CD4-positive, alpha-beta T cell (primary cell): ENCODE measurements at regions of chr7 and their contacts with region 1.

Region 1: GRCh38 chr7:117470777-117471176 is 9.0 kb upstream of the CFTR start:
- DNase-seq: peak in 1 of 14 experiments; percentile 3
- ATAC-seq: no peak
- H3K4me3 ChIP-seq: no peak overlapping the region
- H3K4me3 Mint-ChIP-seq: no peak overlapping the region
- H3K27ac ChIP-seq: no peak overlapping the region
- H3K27ac Mint-ChIP-seq: no peak overlapping the region
- H3K4me1 ChIP-seq: no peaks in the 10 kb centered on the region
- H3K4me1 Mint-ChIP-seq: no peaks in the 10 kb centered on the region
- H3K27me3 ChIP-seq: no peaks in the 10 kb centered on the region
- H3K27me3 Mint-ChIP-seq: no peaks in the 10 kb centered on the region
- CTCF ChIP-seq: no peak

Region 2: GRCh38 chr7:117251687-117252086 is 219.1 kb before region 1 on chr7:
- CTCF ChIA-PET with region 1: no interaction called
- POLR2A ChIA-PET with region 1: no interaction called
- intact Hi-C with region 1: no loop called
- DNase-seq: no peak
- ATAC-seq: no peak
- H3K4me3 ChIP-seq: no peak overlapping the region
- H3K4me3 Mint-ChIP-seq: no peak overlapping the region
- H3K27ac ChIP-seq: no peak overlapping the region
- H3K27ac Mint-ChIP-seq: no peak overlapping the region
- H3K4me1 ChIP-seq: no peaks in the 10 kb centered on the region
- H3K4me1 Mint-ChIP-seq: no peaks in the 10 kb centered on the region
- H3K27me3 ChIP-seq: no peaks in the 10 kb centered on the region
- H3K27me3 Mint-ChIP-seq: no peaks in the 10 kb centered on the region
- CTCF ChIP-seq: no peak

Region 3: DNA sequence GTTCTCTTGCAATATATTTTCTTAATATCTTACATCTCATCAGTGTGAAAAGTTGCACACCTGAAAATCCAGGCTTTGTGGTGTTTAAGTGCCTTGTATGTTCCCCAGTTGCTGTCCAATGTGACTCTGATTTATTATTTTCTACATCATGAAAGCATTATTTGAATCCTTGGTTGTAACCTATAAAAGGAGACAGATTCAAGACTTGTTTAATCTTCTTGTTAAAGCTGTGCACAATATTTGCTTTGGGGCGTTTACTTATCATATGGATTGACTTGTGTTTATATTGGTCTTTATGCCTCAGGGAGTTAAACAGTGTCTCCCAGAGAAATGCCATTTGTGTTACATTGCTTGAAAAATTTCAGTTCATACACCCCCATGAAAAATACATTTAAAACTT is 38.9 kb after region 1 on chr7:
- CTCF ChIA-PET with region 1: no interaction called
- POLR2A ChIA-PET with region 1: no interaction called
- intact Hi-C with region 1: loop called in 1 of 2 experiments (anchors 1 kb)
- DNase-seq: no peak
- ATAC-seq: no peak
- H3K4me3 ChIP-seq: no peak overlapping the region
- H3K4me3 Mint-ChIP-seq: no peak overlapping the region
- H3K27ac ChIP-seq: no peak overlapping the region
- H3K27ac Mint-ChIP-seq: no peak overlapping the region
- H3K4me1 ChIP-seq: no peaks in the 10 kb centered on the region
- H3K4me1 Mint-ChIP-seq: no peaks in the 10 kb centered on the region
- H3K27me3 ChIP-seq: no peaks in the 10 kb centered on the region
- H3K27me3 Mint-ChIP-seq: no peaks in the 10 kb centered on the region
- CTCF ChIP-seq: no peak

Region 4: GRCh38 chr7:117630501-117630900 is 159.7 kb after region 1 on chr7:
- CTCF ChIA-PET with region 1: no interaction called
- POLR2A ChIA-PET with region 1: no interaction called
- intact Hi-C with region 1: no loop called
- DNase-seq: no peak
- ATAC-seq: no peak
- H3K4me3 ChIP-seq: no peak overlapping the region
- H3K4me3 Mint-ChIP-seq: no peak overlapping the region
- H3K27ac ChIP-seq: no peak overlapping the region
- H3K27ac Mint-ChIP-seq: no peak overlapping the region
- H3K4me1 ChIP-seq: no peaks in the 10 kb centered on the region
- H3K4me1 Mint-ChIP-seq: no peaks in the 10 kb centered on the region
- H3K27me3 ChIP-seq: no peaks in the 10 kb centered on the region
- H3K27me3 Mint-ChIP-seq: no peaks in the 10 kb centered on the region
- CTCF ChIP-seq: no peak

Region 5: DNA sequence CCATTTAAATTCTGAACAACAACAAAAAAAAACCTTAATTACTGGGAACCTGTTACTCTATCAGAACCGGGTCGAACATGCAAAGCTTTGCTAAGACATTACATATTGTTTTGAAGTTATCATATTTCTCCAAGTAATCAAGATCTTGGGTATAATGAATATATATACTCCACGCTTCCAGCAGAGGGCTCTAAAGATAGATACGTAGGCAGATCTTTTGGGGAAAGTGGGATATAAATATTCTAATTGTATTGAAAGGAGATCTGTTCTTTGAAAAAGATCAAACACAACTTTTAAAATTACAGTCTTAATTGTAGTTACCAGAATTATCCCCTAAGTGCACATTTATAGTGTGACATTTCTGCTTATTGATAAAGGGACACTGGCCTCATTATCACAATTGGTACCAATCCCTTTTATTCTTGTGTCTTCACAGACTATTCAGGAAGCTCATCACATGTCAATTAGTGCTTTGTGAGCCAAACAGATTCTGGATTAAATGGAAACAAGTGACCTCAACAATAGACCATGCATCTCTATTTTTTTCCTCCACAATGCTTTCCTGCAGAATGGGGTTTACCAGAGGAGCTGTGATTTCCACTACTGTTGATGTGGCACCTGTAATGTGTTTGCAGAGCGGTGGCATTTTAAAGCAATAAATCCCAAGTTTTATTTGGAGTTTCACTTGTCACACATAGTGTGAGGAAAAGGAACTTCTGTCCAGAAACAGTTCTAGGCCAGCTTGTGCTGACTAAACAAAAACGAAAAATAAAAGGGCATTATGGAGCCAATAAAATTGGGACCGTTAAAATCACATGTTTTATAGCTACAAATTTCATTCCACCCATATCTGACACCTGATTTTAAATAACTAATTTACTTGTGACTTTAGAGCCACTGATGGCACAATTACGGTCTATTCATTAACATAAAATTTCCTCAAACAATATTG is 280.1 kb after region 1 on chr7:
- CTCF ChIA-PET with region 1: no interaction called
- POLR2A ChIA-PET with region 1: no interaction called
- intact Hi-C with region 1: no loop called
- DNase-seq: no peak
- ATAC-seq: no peak
- H3K4me3 ChIP-seq: no peak overlapping the region
- H3K4me3 Mint-ChIP-seq: no peak overlapping the region
- H3K27ac ChIP-seq: no peak overlapping the region
- H3K27ac Mint-ChIP-seq: no peak overlapping the region
- H3K4me1 ChIP-seq: no peaks in the 10 kb centered on the region
- H3K4me1 Mint-ChIP-seq: no peaks in the 10 kb centered on the region
- H3K27me3 ChIP-seq: no peaks in the 10 kb centered on the region
- H3K27me3 Mint-ChIP-seq: no peaks in the 10 kb centered on the region
- CTCF ChIP-seq: no peak